Prostate gland (tissue), 2 donors: ENCODE measurements at regions of chr19 and their contacts with region 1.

Region 1: DNA sequence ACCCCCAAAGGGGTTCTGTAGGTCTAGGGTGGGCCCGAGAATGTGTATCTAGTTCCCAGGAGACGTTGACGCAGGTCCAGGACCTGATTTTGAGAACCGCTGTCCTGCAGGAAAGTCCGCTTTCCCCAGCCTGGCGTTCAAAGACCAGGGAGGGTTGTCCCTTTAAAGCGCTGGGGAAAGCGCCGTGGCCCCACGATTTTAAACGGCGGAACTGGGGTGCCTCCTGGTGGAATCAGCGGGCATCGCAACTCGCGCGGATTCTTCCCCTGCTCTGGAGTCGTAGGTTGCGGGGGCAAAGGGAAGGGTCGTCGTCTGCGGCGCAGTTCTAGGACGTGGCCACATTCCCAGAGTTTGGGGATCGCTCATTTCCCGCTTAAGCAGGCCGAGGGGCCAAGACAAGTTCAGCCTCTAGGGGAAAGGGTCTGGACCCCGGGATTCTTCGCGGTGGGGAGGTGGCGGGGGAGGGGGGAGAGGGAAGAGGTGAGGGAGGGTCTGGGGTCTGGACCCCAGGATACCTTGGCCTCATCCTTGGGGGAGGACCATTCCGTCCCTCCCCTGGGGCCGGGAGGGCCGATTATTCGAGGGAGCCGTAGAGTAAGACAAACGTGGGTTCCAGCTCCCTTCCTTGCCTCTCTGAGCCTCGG is 7.7 kb downstream of the PNMA8B start:
- DNase-seq: peak; percentile 71
- H3K4me3 ChIP-seq: peak overlapping the region in 1 of 2 donors; percentile 12
- H3K27ac ChIP-seq: no peak overlapping the region
- H3K4me1 ChIP-seq: no peaks in the 10 kb centered on the region
- H3K27me3 ChIP-seq: no peaks in the 10 kb centered on the region
- CTCF ChIP-seq: peak; percentile 82 to 98 (median 96)
- POLR2A ChIP-seq: no peak

Region 2: DNA sequence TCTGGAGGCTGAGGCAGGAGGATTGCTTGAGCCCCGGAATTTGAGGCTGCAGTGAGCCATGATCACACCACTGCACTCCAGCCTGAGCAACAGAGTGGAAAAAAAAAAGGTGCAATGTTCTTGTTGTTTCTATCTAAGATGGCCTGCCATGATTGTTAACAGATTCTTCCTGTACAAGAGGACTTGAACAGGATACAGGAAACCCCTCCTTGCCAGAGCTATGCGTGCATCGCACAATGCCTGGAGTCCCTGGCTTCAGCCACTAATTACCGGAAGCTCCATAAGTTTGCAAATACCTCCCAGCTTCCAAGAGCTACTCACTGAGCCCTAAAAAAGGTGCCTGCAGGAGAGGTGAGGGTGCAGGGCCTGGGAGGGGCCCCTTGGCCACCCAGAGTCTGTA is 204.2 kb before region 1 on chr19:
- intact Hi-C with region 1: loop called (anchors 5 kb)
- DNase-seq: no peak
- H3K4me3 ChIP-seq: no peak overlapping the region
- H3K27ac ChIP-seq: no peak overlapping the region
- H3K4me1 ChIP-seq: no peaks in the 10 kb centered on the region
- H3K27me3 ChIP-seq: no peaks in the 10 kb centered on the region
- CTCF ChIP-seq: no peak
- POLR2A ChIP-seq: no peak

Region 3: GRCh38 chr19:46404055-46404752 is 83.7 kb before region 1 on chr19:
- intact Hi-C with region 1: loop called (anchors 2 kb)
- DNase-seq: peak; percentile 57
- H3K4me3 ChIP-seq: peak overlapping the region; percentile 31 to 33
- H3K27ac ChIP-seq: peak overlapping the region; percentile 65 to 69
- H3K4me1 ChIP-seq: peaks cover 3% of the 10 kb centered on the region
- H3K27me3 ChIP-seq: no peaks in the 10 kb centered on the region
- CTCF ChIP-seq: peak; percentile 8 to 37 (median 34)
- POLR2A ChIP-seq: peak; percentile 43

Region 4: DNA sequence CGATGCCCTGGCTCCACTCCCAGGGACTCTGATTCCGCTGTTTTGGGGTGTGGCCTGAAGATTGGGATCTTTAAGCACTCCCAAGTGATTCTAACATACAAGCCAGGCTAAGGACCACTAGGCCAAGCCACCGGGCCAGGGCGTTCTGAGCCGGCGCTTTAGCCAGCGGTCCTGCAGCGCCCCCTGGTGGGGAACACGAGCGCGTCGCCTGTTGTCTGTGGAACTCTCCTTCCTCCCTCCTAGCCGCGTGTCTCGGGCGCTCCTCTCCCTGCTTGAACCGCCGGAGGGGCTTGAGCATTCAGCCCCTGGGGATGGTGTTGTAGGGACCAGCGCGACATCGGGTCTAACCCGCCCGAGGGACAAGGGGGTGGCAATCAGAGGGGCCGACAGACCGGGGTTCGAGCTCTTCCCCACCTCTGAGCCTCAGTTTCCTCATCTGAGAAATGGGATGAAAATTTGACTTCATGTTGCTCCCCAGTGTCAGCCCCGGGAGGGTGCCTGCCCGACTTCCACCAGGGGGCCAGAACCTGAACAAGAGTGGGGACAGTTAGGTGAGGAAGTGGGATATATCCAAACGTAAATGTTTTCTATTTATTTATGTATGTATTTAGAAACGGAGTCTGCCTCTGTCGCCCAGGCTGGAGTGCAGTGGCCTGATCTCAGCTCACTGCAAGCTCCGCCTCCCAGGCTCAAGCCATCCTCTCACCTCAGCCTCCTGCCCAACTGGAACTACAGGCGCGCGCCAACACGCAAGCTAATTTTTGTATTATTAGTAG is 25.7 kb after region 1 on chr19:
- intact Hi-C with region 1: loop called (anchors 2 kb)
- DNase-seq: peak; percentile 34
- H3K4me3 ChIP-seq: no peak overlapping the region
- H3K27ac ChIP-seq: no peak overlapping the region
- H3K4me1 ChIP-seq: no peaks in the 10 kb centered on the region
- H3K27me3 ChIP-seq: no peaks in the 10 kb centered on the region
- CTCF ChIP-seq: peak; percentile 93 to 97 (median 95)
- POLR2A ChIP-seq: no peak